ENCODE measurements at regions of chr1 and their contacts with region 1.

Region 1: DNA sequence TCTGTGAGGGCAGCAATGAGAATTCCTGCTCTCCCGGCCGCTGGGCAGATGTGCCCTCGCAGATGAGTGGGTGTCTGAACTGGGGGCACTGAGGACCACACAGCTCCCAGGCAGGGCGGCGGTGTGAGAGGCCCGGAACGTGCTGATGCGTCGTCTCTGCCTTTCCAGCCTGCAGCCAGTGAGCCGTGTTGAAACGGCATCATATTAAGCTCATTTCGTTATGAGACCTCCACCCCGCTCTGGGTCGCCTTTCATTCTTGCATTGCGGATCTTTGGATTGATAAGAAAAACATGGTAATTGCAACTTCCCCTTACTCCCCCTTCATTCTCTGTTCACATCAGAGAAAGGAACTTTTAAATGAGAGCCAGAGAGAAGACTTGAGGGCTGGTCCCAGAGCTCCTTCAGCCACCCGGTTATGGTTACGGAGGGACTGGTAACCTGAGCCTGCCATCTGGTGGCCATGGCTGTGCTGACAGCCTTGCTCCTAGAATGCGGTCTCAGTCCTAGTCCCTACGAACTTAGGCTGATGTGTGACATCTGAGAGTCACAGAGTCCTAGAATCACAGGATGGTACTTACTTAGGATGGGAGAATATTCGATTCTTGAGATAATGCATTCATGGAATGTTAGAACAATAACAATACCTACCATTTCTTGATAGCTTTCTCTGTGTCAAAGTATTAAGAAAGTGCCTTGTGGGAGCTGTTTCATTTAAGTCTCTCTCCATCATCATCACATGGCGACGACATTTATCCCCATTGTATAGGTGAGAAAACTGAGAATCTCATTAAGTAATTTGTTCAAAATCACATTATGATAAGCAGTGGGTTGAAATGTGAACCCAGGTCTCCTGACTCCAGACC is 271.0 kb downstream of the TRABD2B start:
- DNase-seq: peak; percentile 81
- CTCF ChIP-seq: peak; percentile 85

Region 2: DNA sequence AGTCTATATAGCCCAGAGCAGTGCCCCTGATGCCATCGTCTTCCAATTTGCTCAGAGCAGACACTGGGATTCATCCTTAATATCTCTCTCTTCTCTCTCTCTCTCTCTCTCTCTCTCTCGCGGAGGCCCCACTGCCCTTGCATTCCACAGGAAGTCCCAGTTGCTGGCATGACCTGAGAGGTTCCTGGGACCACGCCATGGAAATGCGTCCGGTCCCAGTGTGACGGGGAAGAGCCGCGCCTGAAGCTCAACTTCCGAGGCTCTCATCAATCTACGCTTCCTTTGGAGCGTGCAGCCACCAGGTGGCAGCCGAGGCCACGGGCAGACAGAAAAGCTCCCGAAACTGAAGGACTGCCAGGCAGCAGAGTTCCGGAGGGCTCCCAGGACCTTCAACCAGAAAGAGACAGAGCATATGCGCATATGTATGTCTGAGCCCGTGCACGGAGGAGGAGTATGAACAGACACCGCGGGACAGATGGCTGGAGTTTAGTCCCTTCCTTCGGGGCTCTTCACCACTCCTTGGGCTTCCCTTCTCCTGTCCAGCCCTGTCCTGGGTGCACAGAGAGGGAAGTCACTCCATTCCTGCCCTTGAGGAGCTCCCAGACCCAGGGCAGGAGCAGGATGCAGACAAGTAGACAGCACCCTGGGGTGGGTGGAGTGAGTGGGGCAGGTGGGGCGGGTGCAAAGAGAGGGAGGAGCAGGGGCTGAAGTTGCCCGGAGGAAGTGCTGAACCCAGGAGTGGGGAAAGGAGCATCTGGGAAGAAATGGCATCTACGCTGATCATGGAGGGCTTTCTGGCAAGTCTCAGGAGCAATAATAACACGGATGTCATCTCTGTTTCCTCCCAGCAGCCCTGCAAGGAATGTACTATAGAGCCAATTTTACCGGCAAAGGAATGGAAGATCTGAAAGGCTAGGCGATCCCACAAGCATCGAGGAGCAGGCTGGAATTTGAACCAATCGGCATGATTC is 546.9 kb before region 1 on chr1:
- CTCF ChIA-PET with region 1: interaction called, 39 read pairs
- POLR2A ChIA-PET with region 1: no interaction called
- DNase-seq: peak; percentile 87
- CTCF ChIP-seq: peak; percentile 97

Region 3: GRCh38 chr1:47710329-47711071 is 15.7 kb before region 1 on chr1:
- CTCF ChIA-PET with region 1: interaction called, 50 read pairs
- POLR2A ChIA-PET with region 1: no interaction called
- DNase-seq: peak; percentile 91
- CTCF ChIP-seq: peak; percentile 95

Region 4: DNA sequence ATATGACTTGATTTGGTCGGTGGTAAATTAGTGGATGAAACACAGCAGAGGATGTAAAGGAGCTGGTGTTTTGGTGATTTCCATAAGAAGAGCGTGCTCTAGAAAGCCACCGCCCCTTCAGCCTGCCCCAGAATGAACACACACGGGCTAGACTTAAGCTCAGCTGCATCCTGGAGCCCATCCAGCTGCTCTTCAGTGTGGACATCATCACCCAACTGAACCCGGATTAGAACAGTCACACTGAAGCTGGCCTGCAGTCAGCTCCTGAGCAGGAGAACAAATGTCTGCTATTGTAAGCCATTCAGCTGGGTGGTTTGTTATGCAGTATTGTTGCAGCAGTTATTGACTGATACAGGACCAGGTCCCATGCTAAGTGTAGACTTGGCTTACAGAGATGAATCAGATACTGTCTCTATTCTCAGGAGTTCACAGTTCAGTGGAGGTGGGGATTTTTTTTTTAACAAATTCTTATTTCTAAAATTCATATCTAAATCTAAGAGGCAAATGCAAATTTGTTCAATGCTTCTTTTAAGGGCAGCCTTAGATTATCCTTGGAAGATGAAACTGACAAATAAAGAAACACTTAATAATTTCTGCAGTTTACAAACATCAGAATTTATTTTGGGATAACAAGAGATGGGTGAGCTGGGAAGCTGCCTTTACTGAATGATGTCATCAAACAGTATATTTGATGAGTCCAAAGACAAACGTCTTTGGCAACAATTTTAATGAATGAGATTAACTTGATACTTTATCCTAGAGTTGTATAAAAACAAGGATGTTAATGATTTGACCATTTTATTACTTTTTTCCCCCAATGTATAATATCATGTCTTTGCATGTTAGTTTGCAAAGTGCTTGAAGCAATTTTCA is 19.7 kb after region 1 on chr1:
- CTCF ChIA-PET with region 1: interaction called, 13 read pairs
- POLR2A ChIA-PET with region 1: no interaction called
- DNase-seq: no peak
- CTCF ChIP-seq: no peak

Region 5: DNA sequence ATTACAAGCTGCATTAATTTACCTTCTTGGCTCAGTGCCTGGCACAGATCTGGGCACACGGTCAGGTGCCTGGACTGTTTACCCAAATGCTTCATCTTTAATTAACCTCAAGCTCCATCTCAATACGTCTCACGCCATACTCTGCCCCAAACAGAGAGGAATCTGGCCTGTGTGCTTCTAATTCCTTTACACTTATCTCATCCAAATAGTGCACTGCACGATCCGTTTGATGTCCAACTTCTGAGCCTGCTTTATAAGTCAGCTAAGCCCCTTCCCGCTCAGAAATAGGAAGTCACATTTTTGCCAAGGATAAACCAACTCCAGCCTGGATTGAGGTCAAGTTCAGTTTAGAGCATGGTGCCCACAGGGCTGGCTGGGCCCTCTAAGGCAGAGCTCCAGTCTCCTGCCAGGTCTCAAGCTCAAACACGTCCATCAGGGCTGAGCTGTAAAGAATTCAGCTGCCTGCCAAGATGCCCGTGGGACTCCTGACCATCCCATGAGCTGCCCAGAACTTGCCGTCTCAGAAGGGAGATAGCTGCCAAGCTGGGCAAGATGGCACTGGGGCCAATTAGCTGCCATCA is 37.5 kb after region 1 on chr1:
- CTCF ChIA-PET with region 1: interaction called, 14 read pairs
- POLR2A ChIA-PET with region 1: no interaction called
- DNase-seq: no peak
- CTCF ChIP-seq: no peak

Region 6: GRCh38 chr1:47972864-47973432 is 246.7 kb after region 1 on chr1:
- CTCF ChIA-PET with region 1: no interaction called
- POLR2A ChIA-PET with region 1: no interaction called
- DNase-seq: no peak
- CTCF ChIP-seq: no peak